H1 (cell line): ENCODE measurements at regions of chr12 and their contacts with region 1.

Region 1: DNA sequence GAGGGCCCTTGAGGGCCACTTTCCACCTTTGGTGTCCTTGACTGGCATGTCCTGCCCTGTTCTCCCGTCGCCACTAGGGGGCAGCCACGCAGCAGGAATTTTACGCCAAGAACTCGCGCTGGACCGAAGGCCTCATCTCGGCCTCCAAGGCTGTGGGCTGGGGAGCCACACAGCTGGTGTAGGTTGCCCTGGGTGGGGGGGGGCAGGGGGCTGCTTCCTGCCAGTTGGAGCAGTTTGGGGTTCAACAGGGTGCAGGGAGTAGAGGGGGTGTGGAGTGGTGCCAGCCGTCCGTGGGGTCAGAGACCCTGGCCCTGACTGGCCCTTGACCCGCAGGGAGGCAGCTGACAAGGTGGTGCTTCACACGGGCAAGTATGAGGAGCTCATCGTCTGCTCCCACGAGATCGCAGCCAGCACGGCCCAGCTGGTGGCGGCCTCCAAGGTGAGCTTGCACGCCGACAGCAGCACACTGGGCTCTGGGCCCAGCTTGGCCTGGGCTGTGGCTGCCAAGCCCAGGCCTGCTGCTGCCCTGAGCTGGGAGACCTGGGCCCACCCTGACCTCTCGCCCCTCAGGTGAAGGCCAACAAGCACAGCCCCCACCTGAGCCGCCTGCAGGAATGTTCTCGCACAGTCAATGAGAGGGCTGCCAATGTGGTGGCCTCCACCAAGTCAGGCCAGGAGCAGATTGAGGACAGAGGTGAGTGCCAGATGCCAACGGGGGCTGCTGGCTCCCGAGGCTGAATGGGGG is 25.3 kb downstream of the HIP1R start:
- DNase-seq: peak; percentile 39 to 95
- H3K4me3 ChIP-seq: no peak overlapping the region
- H3K27ac ChIP-seq: no peak overlapping the region
- H3K4me1 ChIP-seq: 0 out of 7 replicates have a peak, but pooled peaks cover 0 to 2% (median 0%) of the 10 kb centered on the region in 4 experiments
- H3K27me3 ChIP-seq: peaks cover 0 to 2% (median 0%) of the 10 kb centered on the region in 4 experiments; a peak in 1 of 7 replicates
- CTCF ChIP-seq: peak in 2 of 3 experiments; percentile 92 to 95; a peak in 3 of 4 replicates
- EP300 ChIP-seq: peak in 1 of 2 experiments; percentile 57; a peak in 1 of 3 replicates
- POLR2A ChIP-seq: no peak
- RAD21 ChIP-seq: peak; percentile 93 to 96

Region 2: DNA sequence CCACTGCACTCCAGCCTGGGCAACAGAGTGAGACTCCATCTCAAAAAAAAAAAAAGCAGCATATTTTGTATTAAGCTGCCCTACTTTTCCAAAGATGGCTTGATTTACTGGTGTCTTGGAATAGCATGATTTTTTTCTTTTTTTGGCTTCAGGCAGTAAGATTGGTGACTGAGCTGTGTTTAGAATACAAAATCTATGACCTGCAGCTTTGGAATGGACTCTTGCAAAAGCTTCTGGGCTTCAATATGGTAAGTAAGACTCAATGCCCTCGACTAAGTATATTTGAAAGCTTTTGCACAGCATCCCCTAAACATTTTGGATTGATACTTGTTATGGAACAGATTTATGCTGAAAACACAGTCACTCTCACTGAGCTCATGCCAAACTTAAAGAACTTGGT is 245.7 kb before region 1 on chr12:
- CTCF ChIA-PET with region 1: no interaction called
- POLR2A ChIA-PET with region 1: no interaction called
- DNase-seq: no peak
- H3K4me3 ChIP-seq: no peak overlapping the region
- H3K27ac ChIP-seq: no peak overlapping the region
- H3K4me1 ChIP-seq: no peaks in the 10 kb centered on the region
- H3K27me3 ChIP-seq: no peaks in the 10 kb centered on the region
- CTCF ChIP-seq: no peak
- EP300 ChIP-seq: no peak
- POLR2A ChIP-seq: no peak
- RAD21 ChIP-seq: no peak

Region 3: DNA sequence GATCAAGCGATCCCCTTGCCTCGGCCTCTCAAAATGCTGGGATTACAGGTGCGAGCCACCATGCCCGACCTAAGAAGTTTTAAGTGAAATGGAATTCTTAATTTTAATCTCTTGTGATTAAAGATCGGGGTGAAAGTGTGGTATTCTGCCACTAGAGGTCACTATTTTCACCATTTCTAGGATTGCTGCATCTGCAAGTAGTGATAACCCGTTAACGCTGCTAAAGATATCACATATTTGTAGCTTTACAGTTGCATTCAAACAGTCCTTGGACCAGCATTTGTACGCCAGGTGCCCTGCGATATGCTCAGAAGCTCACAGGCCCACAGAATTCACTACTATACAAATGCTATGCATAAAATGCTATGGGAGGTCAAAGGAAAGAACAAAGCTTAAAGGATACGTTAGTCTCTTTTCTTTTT is 66.8 kb before region 1 on chr12:
- CTCF ChIA-PET with region 1: interaction called, 11 read pairs
- POLR2A ChIA-PET with region 1: no interaction called
- DNase-seq: no peak
- H3K4me3 ChIP-seq: no peak overlapping the region
- H3K27ac ChIP-seq: no peak overlapping the region
- H3K4me1 ChIP-seq: peaks cover 0 to 3% (median 0%) of the 10 kb centered on the region in 4 experiments; a peak in 2 of 7 replicates
- H3K27me3 ChIP-seq: no peaks in the 10 kb centered on the region
- CTCF ChIP-seq: peak in 2 of 3 experiments; percentile 45 to 75; a peak in 2 of 4 replicates
- EP300 ChIP-seq: no peak
- POLR2A ChIP-seq: no peak
- RAD21 ChIP-seq: peak; percentile 58 to 64

Region 4: DNA sequence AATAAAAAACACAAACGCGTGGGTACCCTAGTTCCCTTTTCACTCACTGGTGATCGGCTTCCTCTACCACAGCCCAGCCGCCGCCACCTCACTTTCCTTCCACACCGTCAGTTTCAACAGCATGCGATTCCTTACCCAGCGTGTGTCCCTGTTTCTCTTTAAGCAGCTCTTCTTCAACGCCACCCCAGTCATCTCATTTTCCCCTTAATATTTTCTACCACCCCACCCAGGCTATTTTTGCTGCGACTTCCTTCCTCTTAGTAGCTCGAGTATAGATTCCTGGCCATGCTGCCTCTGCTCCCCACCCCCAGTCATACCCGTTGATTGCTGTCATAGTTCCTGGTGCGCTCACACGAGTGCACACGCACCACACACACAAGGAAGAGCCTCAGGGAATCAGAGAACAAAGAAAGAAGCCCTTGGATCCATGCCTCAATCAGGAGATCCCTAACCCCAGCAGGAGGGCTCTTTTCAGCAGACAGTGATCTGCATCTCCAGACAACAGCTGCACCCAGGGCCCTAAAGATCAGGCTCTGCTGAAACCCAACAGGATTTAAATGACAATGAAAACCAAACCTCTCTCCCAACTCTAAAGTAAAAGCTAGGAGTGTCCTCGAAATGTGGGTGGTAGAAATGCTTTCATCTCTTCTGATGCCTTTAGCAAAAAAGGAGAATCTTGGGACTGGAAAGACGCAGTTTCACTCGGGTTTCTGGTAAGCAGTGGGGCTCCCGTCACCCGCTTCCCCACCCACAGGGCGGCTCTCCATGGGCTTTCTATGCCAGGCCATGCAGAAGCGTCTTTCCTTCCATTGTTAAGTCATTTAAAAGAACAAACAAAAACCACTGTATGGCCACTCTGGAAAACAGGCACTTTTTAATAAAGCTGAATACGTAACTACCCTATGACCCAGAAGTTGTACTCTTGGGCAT is 11.6 kb after region 1 on chr12:
- CTCF ChIA-PET with region 1: interaction called, 44 read pairs
- POLR2A ChIA-PET with region 1: interaction called, 8 read pairs
- DNase-seq: peak; percentile 94 to 96
- H3K4me3 ChIP-seq: no peak overlapping the region; a peak in 1 of 8 replicates
- H3K27ac ChIP-seq: no peak overlapping the region
- H3K4me1 ChIP-seq: peaks cover 6 to 25% (median 9%) of the 10 kb centered on the region in 4 experiments
- H3K27me3 ChIP-seq: peaks cover 52 to 96% (median 92%) of the 10 kb centered on the region in 4 experiments
- CTCF ChIP-seq: peak in 1 of 3 experiments; percentile 1; a peak in 1 of 4 replicates
- EP300 ChIP-seq: peak; percentile 44 to 97
- POLR2A ChIP-seq: no peak
- RAD21 ChIP-seq: no peak

Region 5: DNA sequence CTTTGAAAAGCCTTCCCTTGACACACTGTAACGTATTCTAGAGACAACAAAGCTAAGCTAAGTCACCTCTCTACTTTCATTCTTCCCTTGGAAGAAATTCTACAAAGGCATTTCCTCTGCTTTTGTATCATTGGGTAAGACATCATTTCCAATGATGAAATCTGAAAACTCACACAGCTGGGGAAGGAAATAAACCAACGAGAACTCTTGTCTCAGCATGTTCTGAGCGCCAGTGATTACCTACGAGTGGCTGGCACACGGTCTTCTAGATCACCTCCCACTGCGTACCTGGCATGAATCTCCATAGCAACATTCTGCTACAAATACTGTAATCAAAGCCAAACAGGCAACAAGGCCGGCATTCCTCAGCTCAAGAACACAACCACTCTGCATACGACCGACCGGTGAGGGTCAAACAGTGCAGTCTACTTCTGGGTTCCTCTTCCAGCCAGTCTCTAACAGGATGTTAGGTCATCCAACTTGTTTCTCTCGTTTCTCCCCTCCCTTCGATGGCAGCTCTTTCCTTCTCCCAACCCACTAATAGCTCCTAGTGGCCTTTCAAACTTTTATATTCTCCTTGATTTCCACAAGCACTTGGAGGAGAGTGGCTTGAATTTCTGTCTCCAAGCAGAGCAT is 27.8 kb after region 1 on chr12:
- CTCF ChIA-PET with region 1: interaction called, 36 read pairs
- POLR2A ChIA-PET with region 1: interaction called, 3 read pairs
- DNase-seq: no peak
- H3K4me3 ChIP-seq: no peak overlapping the region; a peak in 1 of 8 replicates
- H3K27ac ChIP-seq: peak overlapping the region; percentile 11; the same call in 1 of the 2 replicates
- H3K4me1 ChIP-seq: peaks cover 5 to 21% (median 14%) of the 10 kb centered on the region in 4 experiments
- H3K27me3 ChIP-seq: peaks cover 0 to 3% (median 0%) of the 10 kb centered on the region in 4 experiments; a peak in 3 of 7 replicates
- CTCF ChIP-seq: no peak
- EP300 ChIP-seq: 0 out of 3 replicates have a peak, but pooled peaks of 1 of the 2 experiments have one; percentile 52
- POLR2A ChIP-seq: 0 out of 3 replicates have a peak, but pooled peaks of 1 of the 2 experiments have one; percentile 27
- RAD21 ChIP-seq: no peak

Region 6: GRCh38 chr12:122965851-122966722 is 105.6 kb after region 1 on chr12 and contains the start of gene ABCB9:
- CTCF ChIA-PET with region 1: interaction called, 11 read pairs
- POLR2A ChIA-PET with region 1: no interaction called
- DNase-seq: peak; percentile 90 to 99
- H3K4me3 ChIP-seq: peak within 1 kb of the TSS; percentile 54 to 86 (median 72)
- H3K27ac ChIP-seq: no peak within 1 kb of the TSS
- H3K4me1 ChIP-seq: peaks cover 4 to 5% (median 5%) of the 10 kb centered on the region in 4 experiments; a peak in 6 of 7 replicates
- H3K27me3 ChIP-seq: no peaks in the 10 kb centered on the region
- CTCF ChIP-seq: no peak
- EP300 ChIP-seq: peak in 1 of 2 experiments; percentile 80; a peak in 1 of 3 replicates
- POLR2A ChIP-seq: no peak
- RAD21 ChIP-seq: no peak
- total RNA-seq, gene ABCB9: 6.3 and 8.0 TPM in 2 replicates